ENCODE measurements at regions of chr20 and their contacts with region 1.

Region 1: DNA sequence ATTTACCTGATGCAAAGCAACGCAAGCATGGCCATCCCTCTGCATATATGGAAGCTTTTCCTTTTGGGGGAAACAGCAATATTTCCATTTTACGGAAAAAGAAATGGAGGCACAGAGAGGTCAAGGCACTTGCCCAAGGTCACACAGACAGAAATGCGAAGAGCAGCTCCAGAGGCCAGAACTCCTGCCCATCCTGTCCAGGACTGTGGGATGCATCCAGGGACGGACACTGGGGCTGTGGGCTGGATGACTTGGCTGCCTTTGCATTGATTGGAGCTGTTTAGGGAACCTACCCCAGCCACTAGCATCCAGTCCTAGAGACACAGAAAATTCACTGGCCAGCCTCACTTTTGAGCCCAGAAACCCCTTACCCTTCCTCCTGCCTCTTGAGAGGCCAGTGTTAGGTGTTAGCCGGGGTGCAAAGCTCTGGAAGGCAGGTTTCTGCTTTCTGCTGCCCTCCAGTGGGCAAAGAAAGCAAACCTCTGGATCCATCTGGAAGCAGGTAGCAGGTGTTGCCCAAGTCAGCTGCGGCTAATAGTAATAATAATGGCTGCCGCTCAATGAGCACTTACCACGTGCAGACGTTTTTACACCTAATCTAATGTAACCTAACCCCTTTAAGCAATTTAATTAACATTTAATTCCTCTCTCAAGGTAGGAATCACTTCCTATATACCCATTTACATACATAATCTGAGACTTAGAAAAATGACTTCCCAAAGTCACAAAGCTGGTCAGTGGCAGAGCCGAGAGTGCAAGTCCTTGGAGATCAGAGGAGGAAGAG is 31.7 kb upstream of the CCN5 start:
- DNase-seq: peak; percentile 91
- H3K4me3 ChIP-seq: no peak overlapping the region
- H3K27ac ChIP-seq: peak overlapping the region; percentile 41
- H3K4me1 ChIP-seq: peaks cover 32% of the 10 kb centered on the region
- CTCF ChIP-seq: peak; percentile 91

Region 2: DNA sequence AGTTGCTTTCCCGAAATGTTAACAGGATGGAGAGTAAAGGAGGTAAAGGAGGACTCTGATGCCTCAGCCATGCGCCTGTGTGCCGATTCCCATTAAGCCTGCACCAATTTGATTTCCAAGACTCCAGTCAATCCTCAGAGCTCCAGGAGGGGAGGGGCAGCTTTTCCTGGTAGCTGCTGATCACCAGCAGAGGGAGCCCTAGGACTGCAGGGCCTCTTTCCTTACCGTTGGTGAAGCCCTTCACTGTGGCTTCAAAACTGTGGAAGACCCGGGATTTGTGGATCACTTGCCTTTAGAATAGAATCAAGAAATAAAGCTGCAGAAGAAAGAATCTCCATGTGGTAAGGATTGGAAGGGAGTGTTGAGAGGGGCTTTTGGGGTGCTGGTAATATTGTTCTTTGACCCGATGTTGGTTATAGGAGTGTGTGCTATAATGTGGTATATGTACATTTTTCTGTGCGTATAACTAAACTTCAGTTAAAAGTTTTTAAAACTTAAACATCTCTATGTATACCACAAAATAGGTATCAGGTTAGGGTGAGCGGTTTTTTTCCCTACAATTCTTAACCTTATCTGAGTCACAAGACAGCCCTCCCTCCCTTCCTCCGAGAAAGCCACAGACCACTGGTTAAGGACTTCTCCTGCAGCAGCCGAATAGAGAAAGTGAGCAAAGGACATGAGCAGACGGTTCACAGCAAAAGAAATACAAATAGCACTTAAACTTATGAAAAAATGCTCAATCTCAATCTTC is 465.9 kb before region 1 on chr20:
- CTCF ChIA-PET with region 1: no interaction called
- POLR2A ChIA-PET with region 1: no interaction called
- intact Hi-C with region 1: loop called (anchors 2 kb)
- DNase-seq: peak; percentile 68
- H3K4me3 ChIP-seq: no peak overlapping the region
- H3K27ac ChIP-seq: no peak overlapping the region
- H3K4me1 ChIP-seq: peaks cover 14% of the 10 kb centered on the region
- CTCF ChIP-seq: peak; percentile 97

Region 3: GRCh38 chr20:44576297-44576696 is 107.2 kb before region 1 on chr20:
- CTCF ChIA-PET with region 1: interaction called, 3 read pairs
- POLR2A ChIA-PET with region 1: no interaction called
- intact Hi-C with region 1: loop called (anchors 5 kb)
- DNase-seq: peak; percentile 79
- H3K4me3 ChIP-seq: no peak overlapping the region
- H3K27ac ChIP-seq: peak overlapping the region; percentile 40
- H3K4me1 ChIP-seq: peaks cover 75% of the 10 kb centered on the region
- CTCF ChIP-seq: peak; percentile 89

Region 4: GRCh38 chr20:44618318-44618731 is 65.1 kb before region 1 on chr20:
- CTCF ChIA-PET with region 1: interaction called, 3 read pairs
- POLR2A ChIA-PET with region 1: no interaction called
- intact Hi-C with region 1: loop called (anchors 1 kb)
- DNase-seq: peak; percentile 34
- H3K4me3 ChIP-seq: peak overlapping the region; percentile 10
- H3K27ac ChIP-seq: peak overlapping the region; percentile 93
- H3K4me1 ChIP-seq: peaks cover 53% of the 10 kb centered on the region
- CTCF ChIP-seq: no peak

Region 5: DNA sequence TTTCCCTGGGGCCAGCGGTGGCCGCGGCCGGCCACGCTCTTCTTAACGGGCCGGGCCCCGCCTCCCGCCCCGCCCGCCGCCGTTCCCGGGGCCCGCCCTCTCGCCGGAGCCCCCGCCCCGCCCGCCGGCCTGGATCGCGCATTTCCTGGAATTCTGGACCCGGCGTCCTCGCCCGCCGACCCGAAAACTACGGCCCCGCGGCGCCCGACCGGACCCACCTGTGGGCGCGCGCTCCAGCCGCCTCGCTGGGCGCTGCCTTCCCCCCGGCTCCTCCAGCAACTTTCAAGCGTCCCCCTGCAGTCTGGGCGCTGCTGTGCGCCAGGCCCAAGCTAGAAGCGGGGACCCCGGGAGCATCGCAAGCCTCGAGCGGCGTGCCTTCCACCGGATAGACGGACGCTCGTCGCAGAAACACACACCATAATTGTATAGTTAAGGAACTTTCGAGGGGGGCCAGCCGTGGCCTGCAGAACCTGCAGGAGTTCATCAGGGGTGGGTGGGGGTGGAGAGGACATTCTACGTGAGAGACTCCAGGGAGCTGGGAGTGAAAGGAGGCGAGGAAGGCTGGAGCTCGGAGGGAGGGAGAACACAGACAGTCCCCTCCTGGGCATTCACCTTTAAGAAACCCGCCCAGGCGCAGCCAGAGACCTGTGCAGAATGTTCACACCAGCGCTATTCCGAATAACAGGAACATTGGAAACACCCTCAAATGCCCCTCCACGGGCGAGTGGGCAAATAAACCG is 31.6 kb before region 1 on chr20 and contains the start of gene ADA:
- CTCF ChIA-PET with region 1: interaction called, 21 read pairs
- POLR2A ChIA-PET with region 1: interaction called, 4 read pairs
- intact Hi-C with region 1: loop called (anchors 2 kb)
- DNase-seq: peak; percentile 78
- H3K4me3 ChIP-seq: peak within 1 kb of the TSS; percentile 95
- H3K27ac ChIP-seq: peak within 1 kb of the TSS; percentile 99
- H3K4me1 ChIP-seq: peaks cover 56% of the 10 kb centered on the region
- CTCF ChIP-seq: no peak
- total RNA-seq, gene ADA: 67.0 and 78.2 TPM in 2 replicates

Region 6: GRCh38 chr20:44866703-44867335 is 183.4 kb after region 1 on chr20:
- CTCF ChIA-PET with region 1: no interaction called
- POLR2A ChIA-PET with region 1: no interaction called
- intact Hi-C with region 1: loop called (anchors 1 kb)
- DNase-seq: no peak
- H3K4me3 ChIP-seq: no peak overlapping the region
- H3K27ac ChIP-seq: no peak overlapping the region
- H3K4me1 ChIP-seq: no peaks in the 10 kb centered on the region
- CTCF ChIP-seq: no peak

Measured in OCI-LY7 (cell line).